ENCODE measurements at regions of chr12 and their contacts with region 1.

Region 1: DNA sequence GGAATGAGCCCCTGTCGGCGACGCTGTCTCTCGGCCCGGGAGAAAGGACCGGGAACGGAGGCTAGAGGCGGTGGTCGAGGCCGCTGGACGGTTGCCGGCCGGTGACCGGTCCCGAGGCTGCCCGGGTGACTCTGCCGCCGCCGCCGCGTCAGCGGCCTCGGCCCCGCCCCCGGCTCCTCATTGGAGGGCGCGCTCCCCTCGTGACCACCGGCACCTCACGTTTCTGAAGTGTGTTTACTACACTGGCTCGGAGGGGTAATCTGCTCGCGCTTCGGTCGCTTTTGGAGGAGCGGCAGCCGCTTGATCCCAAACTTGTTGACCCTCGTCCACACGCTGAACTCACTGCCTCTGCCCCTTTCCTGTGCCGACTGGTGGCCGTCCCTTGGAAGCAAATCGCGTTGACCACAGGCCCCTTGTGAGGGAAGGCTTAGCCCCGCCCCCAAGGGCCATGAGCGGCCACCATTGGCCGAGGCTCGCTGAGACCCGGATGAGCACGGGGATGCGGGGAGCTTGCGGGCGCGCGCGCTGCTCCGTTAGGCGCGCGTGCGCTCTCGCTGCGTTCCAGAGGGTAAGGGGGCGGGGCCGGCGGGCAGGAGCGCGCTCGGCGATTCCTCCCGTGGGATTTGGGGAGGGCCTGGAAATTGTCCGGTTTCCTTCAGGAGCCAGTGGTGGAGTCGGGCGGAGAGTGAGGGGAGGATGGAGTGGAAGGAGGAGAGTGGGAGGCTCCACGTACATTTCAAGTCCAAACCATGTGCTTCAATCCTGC is at the start of gene CRY1:
- DNase-seq: peak; percentile 95 to 97 (median 96)
- ATAC-seq: peak; percentile 95
- H3K4me3 ChIP-seq: peak within 1 kb of the TSS; percentile 70
- H3K27ac ChIP-seq: peak within 1 kb of the TSS; percentile 94
- H3K4me1 ChIP-seq: peaks cover 9 to 11% of the 10 kb centered on the region in 2 experiments; a peak in 4 of 5 replicates
- H3K27me3 ChIP-seq: no peaks in the 10 kb centered on the region
- CTCF ChIP-seq: no peak
- EP300 ChIP-seq: no peak
- POLR2A ChIP-seq: peak; percentile 88
- RAD21 ChIP-seq: no peak
- polyA plus RNA-seq, gene CRY1: 8.7 to 9.4 TPM

Region 2: DNA sequence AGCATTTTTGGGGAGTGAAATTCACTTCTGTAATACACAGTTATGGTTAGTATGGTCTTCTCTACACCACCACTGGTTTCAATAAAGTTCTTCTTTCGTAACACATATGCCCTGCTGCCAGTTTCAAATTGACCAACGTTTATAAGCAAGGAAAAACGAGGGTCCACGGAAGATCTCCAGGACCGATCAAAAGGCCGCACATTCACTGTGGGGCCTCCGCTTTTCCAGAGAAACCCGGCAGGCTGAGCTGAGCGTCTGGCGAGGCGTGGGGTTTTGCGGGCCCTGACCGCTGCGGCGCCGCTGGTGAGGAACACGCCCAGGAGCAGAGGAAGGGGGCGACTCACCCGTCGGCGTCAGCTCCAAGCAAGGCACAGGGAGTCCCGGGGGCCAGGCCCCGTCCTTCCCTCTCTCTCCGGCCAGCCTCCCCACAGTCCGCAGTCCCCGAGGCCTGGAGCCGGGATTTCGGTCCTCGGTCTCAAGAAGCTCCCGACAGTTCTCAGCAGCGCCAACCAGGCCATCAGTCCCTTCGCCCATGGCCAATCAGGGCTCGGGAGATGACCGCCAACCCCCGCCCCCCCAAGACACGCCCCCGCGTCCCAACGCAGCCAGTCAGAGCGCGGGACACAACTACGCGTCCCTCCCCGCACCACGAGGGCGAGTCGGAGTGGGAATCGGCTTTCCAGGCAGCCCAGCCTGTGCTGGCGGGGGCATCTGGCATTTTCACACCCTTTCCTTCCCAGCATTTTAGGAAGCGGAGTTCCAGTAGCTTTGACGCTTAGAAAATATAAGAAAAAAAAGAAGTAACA is 106.8 kb before region 1 on chr12 and contains the start of gene MTERF2:
- CTCF ChIA-PET with region 1: no interaction called
- POLR2A ChIA-PET with region 1: interaction called, 3 read pairs
- in situ Hi-C with region 1: no loop called
- intact Hi-C with region 1: loop called (anchors 1 kb)
- DNase-seq: peak; percentile 97 to 98 (median 98)
- ATAC-seq: peak; percentile 96
- H3K4me3 ChIP-seq: peak within 1 kb of the TSS; percentile 64
- H3K27ac ChIP-seq: peak within 1 kb of the TSS; percentile 85
- H3K4me1 ChIP-seq: peaks cover 16 to 25% of the 10 kb centered on the region in 2 experiments
- H3K27me3 ChIP-seq: no peaks in the 10 kb centered on the region
- CTCF ChIP-seq: no peak
- EP300 ChIP-seq: no peak
- POLR2A ChIP-seq: peak; percentile 85
- RAD21 ChIP-seq: 0 out of 4 replicates have a peak, but pooled peaks of 1 of the 2 experiments have one; percentile 7
- polyA plus RNA-seq, gene MTERF2: 10.0 to 11.6 TPM

Region 3: GRCh38 chr12:107125833-107126232 is 32.2 kb after region 1 on chr12:
- CTCF ChIA-PET with region 1: no interaction called
- POLR2A ChIA-PET with region 1: no interaction called
- in situ Hi-C with region 1: no loop called
- intact Hi-C with region 1: no loop called
- DNase-seq: no peak
- ATAC-seq: no peak
- H3K4me3 ChIP-seq: no peak overlapping the region
- H3K27ac ChIP-seq: no peak overlapping the region
- H3K4me1 ChIP-seq: no peaks in the 10 kb centered on the region
- H3K27me3 ChIP-seq: peaks cover 2 to 7% of the 10 kb centered on the region in 2 experiments; a peak in 2 of 5 replicates
- CTCF ChIP-seq: no peak
- EP300 ChIP-seq: no peak
- POLR2A ChIP-seq: no peak
- RAD21 ChIP-seq: no peak